Astrocyte of the cerebellum (primary cell): ENCODE measurements at regions of chr7 and their contacts with region 1.

Region 1: DNA sequence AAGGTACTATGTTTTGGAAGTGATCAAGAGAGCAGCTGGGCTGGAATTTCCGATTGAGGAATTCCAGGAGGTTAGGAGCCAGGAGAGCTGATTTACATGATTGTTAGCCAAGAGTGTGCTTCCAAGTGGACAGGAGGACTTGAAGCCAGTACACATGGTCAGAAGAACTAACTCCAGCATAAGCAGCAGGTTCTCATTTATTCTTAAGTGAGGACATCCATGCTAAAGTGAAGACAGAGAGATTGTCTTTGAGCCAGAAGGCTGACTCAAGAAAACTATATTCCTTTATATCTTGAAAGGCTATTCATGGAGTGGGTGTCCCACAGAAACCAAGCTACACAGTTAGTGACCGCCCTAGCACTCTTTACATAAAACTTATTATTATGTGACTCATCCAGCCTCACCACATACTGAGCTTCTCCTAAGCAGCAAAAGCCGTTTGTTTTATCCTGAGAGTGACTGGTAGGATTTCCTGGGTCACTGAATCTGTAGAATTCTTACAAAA is 56.7 kb upstream of the SEMA3A start:
- DNase-seq: peak; percentile 91
- H3K4me3 ChIP-seq: no peak overlapping the region
- CTCF ChIP-seq: no peak

Region 2: GRCh38 chr7:84194543-84195271 is 56.6 kb before region 1 on chr7 and contains the start of gene SEMA3A:
- in situ Hi-C with region 1: loop called (anchors 5 kb)
- DNase-seq: peak; percentile 50
- H3K4me3 ChIP-seq: peak within 1 kb of the TSS; percentile 61
- CTCF ChIP-seq: peak; percentile 7